H1 (cell line): ENCODE measurements at regions of chr10 and their contacts with region 1.

Region 1: DNA sequence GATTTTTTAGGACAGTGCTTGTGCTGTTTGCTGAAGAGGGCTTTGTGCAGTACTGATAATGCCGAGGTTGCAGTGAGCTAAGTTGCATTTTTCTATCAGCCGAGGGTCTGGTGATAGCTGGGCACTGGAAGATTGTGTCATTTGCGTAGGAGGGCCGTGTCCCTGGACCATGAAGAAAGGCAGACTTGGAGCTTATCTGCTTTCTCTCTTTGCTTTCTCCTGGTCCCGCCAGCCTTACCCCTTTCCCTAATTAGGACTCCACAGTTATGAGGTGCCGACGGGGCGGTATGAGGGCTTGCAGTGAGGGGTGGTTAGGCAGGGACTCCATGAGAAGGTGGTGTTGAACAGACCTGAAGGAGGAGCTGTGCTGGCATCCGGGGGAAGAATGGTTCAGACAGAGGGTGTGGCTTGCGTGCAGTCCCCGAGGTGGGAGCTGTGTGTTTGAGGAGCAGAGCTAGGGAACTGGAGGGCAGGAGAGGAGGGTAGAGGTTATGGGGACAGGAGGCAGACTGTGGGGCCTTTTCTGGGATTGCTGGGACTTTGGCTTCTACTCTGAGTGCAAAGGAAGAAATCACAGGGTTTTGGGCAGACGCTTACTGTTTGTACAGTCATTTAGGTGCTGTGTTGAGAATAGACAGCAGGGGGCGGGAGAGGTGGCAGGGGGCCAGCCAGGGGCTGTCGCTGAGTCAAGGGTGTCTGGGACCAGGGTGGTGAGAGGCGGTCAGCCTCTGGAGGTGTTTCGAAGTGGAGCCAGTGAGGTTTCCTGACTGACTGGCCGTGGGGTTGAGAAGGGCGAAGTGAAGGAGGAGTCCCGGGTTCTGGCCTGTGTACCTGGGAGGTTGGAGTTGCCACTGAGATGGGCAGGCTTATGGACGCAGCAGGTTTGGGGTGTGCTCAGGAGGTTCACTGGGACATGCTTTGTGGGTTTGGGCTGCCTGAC is 43.4 kb downstream of the PRF1 start:
- DNase-seq: peak in 1 of 2 experiments; percentile 80
- H3K4me3 ChIP-seq: no peak overlapping the region
- H3K27ac ChIP-seq: no peak overlapping the region
- H3K4me1 ChIP-seq: peaks cover 0 to 6% (median 3%) of the 10 kb centered on the region in 4 experiments; a peak in 4 of 7 replicates
- H3K27me3 ChIP-seq: no peaks in the 10 kb centered on the region
- CTCF ChIP-seq: peak in 2 of 3 experiments; percentile 44 to 62; a peak in 3 of 4 replicates
- EP300 ChIP-seq: no peak
- POLR2A ChIP-seq: no peak
- RAD21 ChIP-seq: peak; percentile 37 to 63; a peak in 3 of 4 replicates

Region 2: DNA sequence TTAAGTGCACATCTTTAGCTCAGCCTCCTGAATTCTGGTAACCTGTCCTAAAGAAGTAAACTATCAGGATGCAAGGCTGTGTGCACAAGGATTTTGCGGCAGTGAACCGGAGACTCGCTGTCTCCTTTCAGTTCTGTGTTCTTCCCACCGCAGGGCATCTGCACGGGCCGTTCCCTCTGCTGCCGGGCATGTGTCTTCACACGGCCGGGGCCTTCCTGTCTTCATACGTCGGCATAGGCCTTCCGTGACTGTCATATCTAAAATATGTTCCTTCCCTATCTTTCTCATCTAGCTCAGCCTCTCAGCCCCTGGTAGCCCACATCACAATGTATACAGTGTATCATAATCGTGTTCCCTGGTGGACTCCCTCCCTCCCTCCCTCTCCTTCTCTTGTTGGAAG is 64.2 kb before region 1 on chr10:
- CTCF ChIA-PET with region 1: no interaction called
- POLR2A ChIA-PET with region 1: no interaction called
- DNase-seq: no peak
- H3K4me3 ChIP-seq: no peak overlapping the region
- H3K27ac ChIP-seq: no peak overlapping the region
- H3K4me1 ChIP-seq: peaks cover 13 to 34% (median 16%) of the 10 kb centered on the region in 4 experiments
- H3K27me3 ChIP-seq: no peaks in the 10 kb centered on the region
- CTCF ChIP-seq: no peak
- EP300 ChIP-seq: no peak
- POLR2A ChIP-seq: no peak
- RAD21 ChIP-seq: no peak

Region 3: GRCh38 chr10:70584909-70585544 is 25.9 kb after region 1 on chr10:
- CTCF ChIA-PET with region 1: interaction called, 47 read pairs
- POLR2A ChIA-PET with region 1: no interaction called
- DNase-seq: peak; percentile 31 to 66
- H3K4me3 ChIP-seq: no peak overlapping the region
- H3K27ac ChIP-seq: no peak overlapping the region
- H3K4me1 ChIP-seq: peaks cover 0 to 6% (median 4%) of the 10 kb centered on the region in 4 experiments; a peak in 5 of 7 replicates
- H3K27me3 ChIP-seq: no peaks in the 10 kb centered on the region
- CTCF ChIP-seq: no peak
- EP300 ChIP-seq: no peak
- POLR2A ChIP-seq: no peak
- RAD21 ChIP-seq: peak in 1 of 2 experiments; percentile 6; a peak in 1 of 4 replicates

Region 4: DNA sequence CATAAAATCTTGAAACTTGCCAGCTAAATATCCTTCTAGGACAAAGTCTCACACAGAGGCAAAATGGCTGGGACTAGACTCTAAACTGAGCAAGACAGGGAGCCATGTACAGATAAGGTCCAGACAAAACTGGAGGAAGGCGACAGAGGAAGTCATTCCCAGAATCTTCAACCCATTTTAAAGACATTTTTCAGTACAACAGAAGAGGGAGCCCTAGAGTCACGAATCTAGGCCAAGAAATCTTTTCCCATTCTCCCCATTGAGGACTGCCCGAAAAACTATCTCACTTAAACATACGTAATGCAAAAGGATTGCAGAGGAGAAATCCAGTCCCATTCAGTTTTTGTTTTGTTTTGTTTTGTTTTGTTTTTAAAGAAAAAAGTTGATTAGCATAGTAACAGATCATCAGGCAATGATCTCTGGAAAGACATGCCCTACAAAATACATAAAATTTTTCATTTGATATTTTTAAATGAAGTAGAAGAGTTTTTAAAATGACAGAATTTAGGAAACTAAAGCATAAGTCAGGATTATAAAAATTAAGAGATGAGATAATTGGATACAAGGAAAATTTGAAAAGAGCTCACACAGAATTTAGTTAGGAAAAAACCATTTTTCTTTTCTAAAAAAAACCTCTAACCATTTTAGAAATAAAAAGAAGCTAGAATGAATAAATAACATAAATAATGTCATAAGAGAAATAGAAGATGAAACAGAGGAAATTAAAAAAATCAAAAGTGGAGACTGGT is 60.3 kb after region 1 on chr10:
- CTCF ChIA-PET with region 1: interaction called, 10 read pairs
- POLR2A ChIA-PET with region 1: no interaction called
- DNase-seq: no peak
- H3K4me3 ChIP-seq: no peak overlapping the region
- H3K27ac ChIP-seq: no peak overlapping the region
- H3K4me1 ChIP-seq: peaks cover 3 to 14% (median 10%) of the 10 kb centered on the region in 4 experiments
- H3K27me3 ChIP-seq: no peaks in the 10 kb centered on the region; a peak in 1 of 7 replicates
- CTCF ChIP-seq: peak in 2 of 3 experiments; percentile 63 to 67; a peak in 2 of 4 replicates
- EP300 ChIP-seq: no peak
- POLR2A ChIP-seq: no peak
- RAD21 ChIP-seq: peak; percentile 87 to 88

Region 5: DNA sequence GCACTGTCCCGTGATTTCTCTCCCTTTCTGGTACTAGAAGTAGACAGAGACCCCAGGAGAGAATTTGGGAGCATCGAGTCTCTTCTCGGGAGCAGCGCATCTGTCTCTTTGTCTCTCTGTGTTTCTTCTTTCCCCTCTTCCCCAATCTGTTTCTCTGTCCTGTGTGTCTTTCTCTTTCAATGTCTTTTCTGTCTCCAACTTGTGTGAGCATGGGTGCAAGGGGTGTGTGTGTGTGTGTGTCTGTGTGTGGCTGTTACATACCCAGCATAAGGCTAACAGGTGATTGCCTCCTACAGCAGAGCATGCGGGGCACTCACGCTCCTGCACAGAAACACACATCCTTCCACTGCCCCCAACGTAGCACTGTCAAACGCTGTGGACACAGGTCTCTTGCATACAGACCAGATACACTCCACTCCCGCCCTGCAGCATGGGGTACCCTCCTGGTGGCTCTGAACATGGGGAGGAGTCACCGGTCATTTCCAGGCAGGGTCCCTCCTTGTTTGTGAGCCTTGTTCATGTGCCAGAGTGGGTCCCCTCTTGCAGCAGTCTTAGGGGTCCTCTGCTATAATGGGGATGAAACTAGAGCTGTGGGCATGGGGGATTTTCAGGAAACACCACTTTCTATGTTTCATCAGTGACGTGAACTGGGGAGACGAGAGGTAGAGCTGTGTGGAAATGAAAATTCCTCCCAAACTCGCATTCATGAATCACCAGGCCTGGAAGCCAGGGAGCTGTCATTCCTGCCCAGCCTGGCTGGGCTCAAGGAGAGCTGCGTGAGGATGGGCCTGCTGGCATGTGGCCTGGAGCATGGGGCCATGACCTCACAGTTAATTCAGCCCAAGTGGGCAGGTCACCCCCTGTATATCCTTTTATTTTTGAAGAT is 114.1 kb after region 1 on chr10:
- CTCF ChIA-PET with region 1: interaction called, 11 read pairs
- POLR2A ChIA-PET with region 1: no interaction called
- DNase-seq: no peak
- H3K4me3 ChIP-seq: peak overlapping the region in 3 of 4 experiments; percentile 24 to 60 (median 52); a peak in 5 of 8 replicates
- H3K27ac ChIP-seq: no peak overlapping the region
- H3K4me1 ChIP-seq: peaks cover 3 to 11% (median 3%) of the 10 kb centered on the region in 4 experiments; a peak in 6 of 7 replicates
- H3K27me3 ChIP-seq: peaks cover 0 to 25% (median 14%) of the 10 kb centered on the region in 4 experiments; a peak in 6 of 7 replicates
- CTCF ChIP-seq: no peak
- EP300 ChIP-seq: no peak
- POLR2A ChIP-seq: no peak
- RAD21 ChIP-seq: no peak

Region 6: DNA sequence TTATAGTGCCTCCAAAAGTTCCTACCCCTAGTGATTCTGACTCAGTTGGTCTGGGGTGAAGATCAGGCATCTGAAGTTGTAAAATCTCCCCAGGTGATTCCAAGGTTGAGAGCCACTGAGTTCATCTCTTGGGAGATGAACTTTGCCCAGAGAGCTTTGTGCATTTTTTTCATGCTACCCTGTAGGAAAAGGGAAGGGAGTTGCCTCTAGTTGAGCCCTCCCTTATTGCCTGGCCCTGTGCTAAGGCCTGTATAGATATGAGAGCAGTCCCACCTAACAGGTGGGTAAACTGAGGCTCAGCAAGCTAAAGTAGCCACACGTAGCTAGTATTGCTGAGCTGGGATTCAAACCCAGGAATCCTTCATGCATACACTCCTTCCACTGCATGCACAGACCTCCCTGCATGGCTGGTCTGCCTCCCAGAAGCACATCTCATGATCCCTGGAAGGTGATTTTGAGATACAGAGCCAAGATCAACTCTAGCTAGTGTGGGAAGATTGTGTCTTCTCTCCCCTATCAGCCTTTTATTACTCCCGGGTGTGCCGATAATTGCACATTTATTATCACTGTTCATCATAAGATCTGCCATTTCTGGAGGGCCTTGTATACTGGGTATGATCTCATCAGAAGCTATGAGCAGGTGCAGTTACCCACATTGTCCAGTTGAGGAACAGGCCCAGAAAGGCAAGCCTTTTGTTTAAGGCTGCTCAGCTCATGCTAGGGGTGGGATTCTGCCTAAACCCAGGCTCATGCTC is 179.0 kb after region 1 on chr10:
- CTCF ChIA-PET with region 1: interaction called, 10 read pairs
- POLR2A ChIA-PET with region 1: no interaction called
- DNase-seq: no peak
- H3K4me3 ChIP-seq: no peak overlapping the region
- H3K27ac ChIP-seq: no peak overlapping the region
- H3K4me1 ChIP-seq: peaks cover 0 to 4% (median 0%) of the 10 kb centered on the region in 4 experiments; a peak in 1 of 7 replicates
- H3K27me3 ChIP-seq: peaks cover 0 to 2% (median 0%) of the 10 kb centered on the region in 4 experiments; a peak in 1 of 7 replicates
- CTCF ChIP-seq: no peak
- EP300 ChIP-seq: no peak
- POLR2A ChIP-seq: no peak
- RAD21 ChIP-seq: no peak

Region 7: DNA sequence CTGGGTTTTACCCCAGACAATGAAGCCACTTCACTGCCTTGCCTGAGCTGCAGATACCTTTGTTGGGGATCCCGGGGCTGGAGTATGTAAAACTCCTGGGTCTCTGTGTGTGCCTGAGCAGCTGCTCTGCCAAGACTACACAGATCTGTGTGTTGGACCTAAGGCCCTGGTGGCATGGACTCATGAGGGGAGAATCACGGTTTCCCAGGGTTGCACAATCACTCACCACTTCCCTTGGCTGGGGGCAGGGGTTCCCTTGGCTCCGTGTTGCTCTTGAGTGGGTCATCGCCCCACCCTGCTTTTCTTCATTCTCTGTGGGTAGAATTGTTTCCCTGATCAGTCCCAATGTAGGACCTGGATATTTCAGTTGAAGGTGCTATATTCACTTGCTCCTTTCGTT is 240.0 kb after region 1 on chr10:
- CTCF ChIA-PET with region 1: no interaction called
- POLR2A ChIA-PET with region 1: no interaction called
- DNase-seq: no peak
- H3K4me3 ChIP-seq: no peak overlapping the region
- H3K27ac ChIP-seq: no peak overlapping the region
- H3K4me1 ChIP-seq: no peaks in the 10 kb centered on the region
- H3K27me3 ChIP-seq: no peaks in the 10 kb centered on the region
- CTCF ChIP-seq: no peak
- EP300 ChIP-seq: no peak
- POLR2A ChIP-seq: no peak
- RAD21 ChIP-seq: no peak